ENCODE measurements at regions of chr1 and their contacts with region 1.

Region 1: GRCh38 chr1:67489643-67490042 is 59.4 kb upstream of the SERBP1 start:
- DNase-seq: peak; percentile 28 to 34
- H3K4me3 ChIP-seq: no peak overlapping the region
- H3K4me3 Mint-ChIP-seq: no peak overlapping the region
- H3K27ac Mint-ChIP-seq: no peak overlapping the region
- H3K4me1 ChIP-seq: no peaks in the 10 kb centered on the region
- H3K4me1 Mint-ChIP-seq: no peaks in the 10 kb centered on the region
- H3K27me3 ChIP-seq: no peaks in the 10 kb centered on the region
- H3K27me3 Mint-ChIP-seq: no peaks in the 10 kb centered on the region
- CTCF ChIP-seq: no peak

Region 2: DNA sequence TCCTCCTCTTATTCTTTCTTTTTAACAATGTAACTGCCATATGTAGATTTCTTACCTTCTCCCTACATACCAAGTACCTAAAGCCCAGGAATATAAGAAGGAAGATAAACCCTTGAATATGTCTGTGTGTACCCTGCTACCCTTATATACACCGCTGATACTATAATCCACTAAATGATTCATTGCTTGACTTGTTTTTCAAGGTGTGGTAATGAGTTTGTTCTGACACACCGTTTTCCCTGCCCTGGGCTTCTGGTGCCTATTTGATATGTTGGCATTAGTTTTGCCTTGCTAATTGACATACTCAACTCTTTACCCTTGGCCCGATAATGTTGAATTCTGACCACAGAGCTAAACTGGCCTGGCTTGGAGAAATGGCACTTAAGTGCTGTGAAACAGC is 259.1 kb before region 1 on chr1:
- CTCF ChIA-PET with region 1: no interaction called
- POLR2A ChIA-PET with region 1: no interaction called
- intact Hi-C with region 1: loop called (anchors 5 kb)
- DNase-seq: no peak
- H3K4me3 ChIP-seq: no peak overlapping the region
- H3K4me3 Mint-ChIP-seq: no peak overlapping the region
- H3K27ac Mint-ChIP-seq: no peak overlapping the region
- H3K4me1 ChIP-seq: no peaks in the 10 kb centered on the region
- H3K4me1 Mint-ChIP-seq: no peaks in the 10 kb centered on the region
- H3K27me3 ChIP-seq: no peaks in the 10 kb centered on the region
- H3K27me3 Mint-ChIP-seq: no peaks in the 10 kb centered on the region
- CTCF ChIP-seq: no peak

Region 3: GRCh38 chr1:67347688-67348472 is 141.8 kb before region 1 on chr1:
- CTCF ChIA-PET with region 1: no interaction called
- POLR2A ChIA-PET with region 1: no interaction called
- intact Hi-C with region 1: loop called (anchors 1 kb)
- DNase-seq: peak; percentile 36 to 38
- H3K4me3 ChIP-seq: no peak overlapping the region
- H3K4me3 Mint-ChIP-seq: no peak overlapping the region
- H3K27ac Mint-ChIP-seq: no peak overlapping the region
- H3K4me1 ChIP-seq: no peaks in the 10 kb centered on the region
- H3K4me1 Mint-ChIP-seq: no peaks in the 10 kb centered on the region
- H3K27me3 ChIP-seq: no peaks in the 10 kb centered on the region
- H3K27me3 Mint-ChIP-seq: no peaks in the 10 kb centered on the region
- CTCF ChIP-seq: peak; percentile 44 to 68

Region 4: DNA sequence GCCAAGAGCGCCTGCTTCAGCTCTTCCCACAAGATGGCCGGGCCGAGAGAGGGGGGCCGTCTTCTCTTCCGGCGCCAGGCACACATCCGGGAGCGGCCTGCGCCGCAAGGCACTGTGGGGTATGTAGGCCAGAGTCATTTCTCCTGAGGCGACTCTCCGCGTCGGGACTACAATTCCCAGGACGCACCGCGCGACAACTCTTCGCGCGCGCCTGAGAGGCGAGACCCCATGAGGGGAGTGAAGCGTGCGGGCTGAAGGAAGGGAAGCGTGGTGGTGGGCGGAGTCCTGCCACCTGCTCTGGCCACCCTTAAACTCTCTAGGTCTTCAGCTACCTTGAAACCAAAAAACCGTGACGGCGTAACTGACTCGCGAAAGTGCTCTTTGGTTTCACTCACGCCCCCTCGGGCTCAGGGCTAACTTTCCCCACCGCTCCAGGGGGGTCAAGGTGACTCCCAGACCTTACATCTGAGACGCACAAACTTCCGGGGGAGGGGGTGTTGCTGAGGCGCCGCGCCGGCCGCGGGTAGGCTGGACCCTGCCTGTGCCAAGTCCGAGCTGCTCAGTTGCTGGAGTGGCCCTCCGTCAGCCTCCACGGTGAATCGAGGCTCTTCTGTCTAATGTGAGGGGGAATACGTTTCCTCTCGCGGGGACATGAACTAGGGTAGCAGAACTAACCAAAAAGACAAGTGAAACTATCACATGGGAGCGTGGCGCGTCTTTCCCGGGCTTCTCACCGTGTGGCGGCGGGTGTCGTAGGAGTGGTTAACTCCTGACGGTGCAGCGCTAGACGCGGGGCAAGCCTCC is 59.1 kb before region 1 on chr1 and contains the start of gene SERBP1:
- CTCF ChIA-PET with region 1: interaction called, 10 read pairs
- POLR2A ChIA-PET with region 1: no interaction called
- intact Hi-C with region 1: loop called (anchors 1 kb)
- DNase-seq: peak; percentile 93 to 94
- H3K4me3 ChIP-seq: peak within 1 kb of the TSS; percentile 83
- H3K4me3 Mint-ChIP-seq: peak within 1 kb of the TSS; percentile 100
- H3K27ac Mint-ChIP-seq: peak within 1 kb of the TSS; percentile 99
- H3K4me1 ChIP-seq: no peaks in the 10 kb centered on the region; the same call in 1 of the 2 replicates
- H3K4me1 Mint-ChIP-seq: peaks cover 8% of the 10 kb centered on the region
- H3K27me3 ChIP-seq: no peaks in the 10 kb centered on the region
- H3K27me3 Mint-ChIP-seq: no peaks in the 10 kb centered on the region
- CTCF ChIP-seq: no peak
- total RNA-seq, gene SERBP1: 182 and 192 TPM in 2 replicates

Measured in Caco-2 (cell line).